HCT116 (cell line): ENCODE measurements at regions of chr5 and their contacts with region 1.

Region 1: GRCh38 chr5:148457183-148457620 is 73.4 kb downstream of the FBXO38 start:
- DNase-seq: no peak
- ATAC-seq: peak; percentile 89
- H3K4me3 ChIP-seq: no peak overlapping the region
- H3K27ac ChIP-seq: no peak overlapping the region
- H3K4me1 ChIP-seq: no peaks in the 10 kb centered on the region
- H3K27me3 ChIP-seq: peaks cover 14% of the 10 kb centered on the region
- CTCF ChIP-seq: peak; percentile 53 to 60 (median 54); a peak in 5 of 6 replicates
- POLR2A ChIP-seq: no peak
- RAD21 ChIP-seq: peak; percentile 51

Region 2: DNA sequence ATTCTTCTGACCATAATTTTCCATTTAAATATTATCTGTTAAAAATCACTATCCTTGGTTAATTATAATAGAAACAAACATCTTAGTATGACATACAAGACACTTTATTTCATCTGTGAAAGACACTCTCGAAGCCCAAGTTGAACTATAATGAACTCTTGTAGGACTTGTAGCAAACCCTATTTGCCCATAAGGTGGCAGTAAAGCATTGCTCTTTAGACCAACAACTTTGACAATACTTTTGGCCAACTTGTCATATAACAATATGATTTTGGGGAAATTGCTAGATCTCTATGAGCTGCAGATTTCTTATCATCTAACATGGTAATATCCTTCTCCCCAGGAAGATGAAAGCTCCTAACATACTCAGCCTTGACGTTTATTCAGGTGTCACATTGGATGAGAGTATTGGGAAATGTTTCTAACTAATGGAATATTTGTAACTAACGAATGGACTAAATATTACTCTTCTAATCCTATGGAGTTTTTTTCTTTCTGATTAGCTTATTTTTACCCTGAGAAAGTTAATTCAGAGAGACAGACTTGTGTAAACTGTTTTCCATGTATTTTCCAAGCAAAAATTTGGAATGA is 277.9 kb before region 1 on chr5:
- CTCF ChIA-PET with region 1: no interaction called
- POLR2A ChIA-PET with region 1: no interaction called
- RAD21 ChIA-PET with region 1: no interaction called
- intact Hi-C with region 1: loop called (anchors 5 kb)
- DNase-seq: peak; percentile 48
- ATAC-seq: peak; percentile 78
- H3K4me3 ChIP-seq: no peak overlapping the region
- H3K27ac ChIP-seq: no peak overlapping the region
- H3K4me1 ChIP-seq: no peaks in the 10 kb centered on the region
- H3K27me3 ChIP-seq: no peaks in the 10 kb centered on the region
- CTCF ChIP-seq: peak; percentile 62 to 76 (median 72)
- POLR2A ChIP-seq: no peak
- RAD21 ChIP-seq: peak; percentile 84